ENCODE measurements at regions of chr22 and their contacts with region 1.

Region 1: DNA sequence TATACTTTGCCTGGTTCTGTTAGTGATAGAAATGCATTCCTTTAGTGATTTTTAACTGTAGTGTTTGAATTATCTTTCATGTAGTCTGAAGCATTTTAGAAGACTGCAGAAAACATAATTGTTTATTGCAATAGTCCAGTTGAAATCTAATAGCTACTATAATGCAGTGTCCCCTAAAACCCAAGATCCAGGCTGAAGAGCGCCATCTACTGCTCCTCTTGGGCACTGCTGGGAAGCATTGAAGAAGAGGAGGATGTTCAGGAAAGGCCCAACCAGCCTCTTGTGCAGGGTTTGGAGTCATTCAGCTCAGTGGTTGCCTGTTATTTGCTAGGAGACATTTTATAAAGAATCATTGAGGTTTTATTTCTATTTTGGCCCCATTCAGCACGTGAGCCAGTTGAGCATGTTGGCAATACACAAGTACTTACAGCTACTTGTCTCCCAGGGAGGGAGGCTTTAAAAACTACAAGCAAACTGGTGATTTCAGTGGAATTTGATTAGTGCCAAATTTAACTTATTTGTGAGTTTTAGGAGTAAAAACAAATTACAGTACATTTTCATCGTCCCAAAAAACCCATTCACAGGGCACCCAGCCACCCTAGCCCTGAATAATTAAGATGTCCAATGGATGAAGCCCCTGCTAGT is 74.9 kb upstream of the HORMAD2 start:
- DNase-seq: peak; percentile 17
- ATAC-seq: peak; percentile 85
- H3K4me3 ChIP-seq: no peak overlapping the region
- H3K27ac ChIP-seq: no peak overlapping the region
- H3K4me1 ChIP-seq: no peaks in the 10 kb centered on the region
- H3K27me3 ChIP-seq: no peaks in the 10 kb centered on the region
- CTCF ChIP-seq: peak; percentile 91 to 97 (median 96)
- EP300 ChIP-seq: no peak
- POLR2A ChIP-seq: no peak
- RAD21 ChIP-seq: peak; percentile 98

Region 2: DNA sequence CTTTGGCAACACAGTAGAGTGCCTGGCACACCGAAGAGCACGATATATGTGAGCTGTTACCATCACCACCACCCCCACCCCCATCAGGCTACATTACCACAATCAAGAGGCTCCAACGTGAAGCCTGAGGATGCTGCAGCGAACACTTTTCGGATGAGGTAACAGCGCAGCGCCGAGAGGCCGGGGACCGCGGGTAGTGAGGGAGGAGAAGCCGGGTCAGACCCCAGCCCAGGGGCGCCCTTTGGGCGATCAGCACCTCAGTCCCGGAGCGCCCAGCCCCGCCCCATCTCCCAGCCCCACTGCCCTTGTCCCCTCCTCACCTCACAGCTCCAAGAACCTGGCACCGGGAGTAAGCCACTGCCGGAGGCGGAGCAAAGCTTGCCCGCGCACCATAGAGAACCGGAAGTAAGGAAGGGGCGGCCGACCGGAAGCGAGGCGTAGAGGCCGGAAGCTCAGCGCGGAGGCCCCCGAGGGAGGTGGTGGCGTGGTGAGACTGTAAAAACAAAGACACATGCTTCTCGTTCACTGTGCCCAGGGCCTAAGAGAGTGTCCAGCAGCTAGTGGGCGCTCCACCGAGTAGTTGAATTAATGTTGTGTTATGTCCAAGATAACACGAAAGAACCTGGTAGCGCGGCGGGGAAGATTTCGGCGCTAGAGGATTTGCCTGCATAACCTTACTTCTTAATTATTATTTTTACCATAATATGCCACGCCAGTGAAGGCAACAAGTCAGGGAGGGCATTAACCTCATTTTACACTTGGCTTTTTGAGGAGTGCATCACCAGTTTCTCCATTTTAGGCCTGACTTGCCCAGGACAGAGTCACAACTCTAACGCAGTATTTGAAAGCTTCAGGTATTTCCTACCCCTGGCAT is 451.7 kb before region 1 on chr22 and contains the start of gene THOC5:
- CTCF ChIA-PET with region 1: no interaction called
- POLR2A ChIA-PET with region 1: no interaction called
- RAD21 ChIA-PET with region 1: no interaction called
- SMC1A ChIA-PET with region 1: no interaction called
- in situ Hi-C with region 1: no loop called
- intact Hi-C with region 1: no loop called
- DNase-seq: peak; percentile 71
- ATAC-seq: peak; percentile 99
- H3K4me3 ChIP-seq: peak within 1 kb of the TSS; percentile 77
- H3K27ac ChIP-seq: peak within 1 kb of the TSS; percentile 68
- H3K4me1 ChIP-seq: no peaks in the 10 kb centered on the region
- H3K27me3 ChIP-seq: no peaks in the 10 kb centered on the region
- CTCF ChIP-seq: peak; percentile 49 to 74 (median 58)
- EP300 ChIP-seq: no peak
- POLR2A ChIP-seq: peak; percentile 91
- RAD21 ChIP-seq: no peak
- polyA plus RNA-seq, gene THOC5: 20.9 to 40.9 TPM

Region 3: GRCh38 chr22:29625090-29625825 is 380.1 kb before region 1 on chr22:
- CTCF ChIA-PET with region 1: interaction called, 41 read pairs
- POLR2A ChIA-PET with region 1: no interaction called
- RAD21 ChIA-PET with region 1: interaction called, 4 read pairs
- SMC1A ChIA-PET with region 1: interaction called, 5 read pairs
- in situ Hi-C with region 1: no loop called
- intact Hi-C with region 1: loop called (anchors 1 kb)
- DNase-seq: no peak
- ATAC-seq: peak; percentile 79
- H3K4me3 ChIP-seq: no peak overlapping the region
- H3K27ac ChIP-seq: no peak overlapping the region
- H3K4me1 ChIP-seq: peaks cover 5% of the 10 kb centered on the region; the same call in 1 of the 2 replicates
- H3K27me3 ChIP-seq: no peaks in the 10 kb centered on the region
- CTCF ChIP-seq: peak; percentile 74 to 93 (median 87)
- EP300 ChIP-seq: no peak
- POLR2A ChIP-seq: no peak
- RAD21 ChIP-seq: peak; percentile 58; the same call in 1 of the 2 replicates

Region 4: DNA sequence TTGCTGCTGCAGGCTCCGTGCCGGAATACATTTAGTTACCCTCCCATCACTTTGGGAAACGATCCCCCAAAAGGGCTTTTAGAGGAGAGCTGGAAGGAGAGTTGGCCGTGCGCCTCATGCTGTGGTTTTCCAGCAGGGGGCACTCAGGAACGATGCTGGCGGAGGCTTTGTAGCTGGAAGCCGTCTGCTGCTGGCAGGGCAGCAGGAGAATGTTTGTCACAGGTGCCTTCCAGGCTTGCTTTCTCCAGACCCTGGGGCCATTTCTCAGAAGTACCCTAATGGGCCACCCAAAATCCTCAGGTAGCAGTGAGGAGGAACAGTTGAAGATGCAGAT is 315.5 kb before region 1 on chr22:
- CTCF ChIA-PET with region 1: interaction called, 51 read pairs
- POLR2A ChIA-PET with region 1: no interaction called
- RAD21 ChIA-PET with region 1: interaction called, 23 read pairs
- SMC1A ChIA-PET with region 1: interaction called, 20 read pairs
- in situ Hi-C with region 1: no loop called
- intact Hi-C with region 1: loop called (anchors 2 kb)
- DNase-seq: no peak
- ATAC-seq: peak; percentile 63
- H3K4me3 ChIP-seq: no peak overlapping the region
- H3K27ac ChIP-seq: no peak overlapping the region
- H3K4me1 ChIP-seq: no peaks in the 10 kb centered on the region
- H3K27me3 ChIP-seq: no peaks in the 10 kb centered on the region
- CTCF ChIP-seq: peak; percentile 61 to 69 (median 67); a peak in 5 of 6 replicates
- EP300 ChIP-seq: no peak
- POLR2A ChIP-seq: no peak
- RAD21 ChIP-seq: peak; percentile 55

Region 5: DNA sequence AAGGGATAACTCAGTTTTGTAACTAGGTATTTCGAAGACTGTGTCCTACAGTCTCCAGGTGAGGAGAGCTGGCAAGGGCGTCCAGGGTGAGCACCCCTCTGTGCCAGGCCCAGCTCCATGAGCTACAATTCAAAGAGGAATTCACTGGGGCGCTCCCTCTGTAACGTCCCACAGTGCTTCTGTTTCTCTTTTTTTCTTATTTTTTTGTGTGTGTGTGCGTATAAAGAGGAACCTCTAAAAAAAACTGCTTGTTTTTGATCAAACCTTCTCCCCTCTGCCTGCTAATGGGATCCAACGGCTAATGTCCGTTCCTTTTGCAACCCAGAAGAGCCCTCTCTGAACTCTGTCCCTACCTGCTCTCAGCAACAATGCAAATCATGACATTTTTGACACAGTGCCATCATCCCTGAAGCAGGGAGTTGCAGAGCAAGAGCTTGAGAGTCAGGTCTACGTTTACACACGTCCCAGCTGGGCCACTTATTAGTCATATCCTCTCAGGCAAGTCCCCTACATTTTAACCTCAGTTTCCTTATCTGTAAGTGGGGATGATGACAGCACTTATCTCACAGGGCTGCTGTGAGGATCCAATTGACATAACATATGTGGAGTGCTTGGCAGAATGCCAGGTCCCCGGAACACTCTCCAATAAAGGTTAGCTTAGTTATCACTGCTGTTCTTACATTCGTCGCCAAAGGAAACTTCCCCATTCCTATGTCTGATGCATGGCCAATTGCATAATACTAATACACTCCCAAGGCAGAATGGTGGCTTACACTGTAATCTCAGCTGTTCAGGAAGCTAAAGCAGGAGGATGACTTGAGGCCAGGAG is 184.2 kb before region 1 on chr22:
- CTCF ChIA-PET with region 1: interaction called, 4 read pairs
- POLR2A ChIA-PET with region 1: no interaction called
- RAD21 ChIA-PET with region 1: interaction called, 4 read pairs
- SMC1A ChIA-PET with region 1: interaction called, 4 read pairs
- in situ Hi-C with region 1: no loop called
- intact Hi-C with region 1: loop called (anchors 5 kb)
- DNase-seq: peak; percentile 82
- ATAC-seq: peak; percentile 98
- H3K4me3 ChIP-seq: no peak overlapping the region
- H3K27ac ChIP-seq: peak overlapping the region; percentile 70
- H3K4me1 ChIP-seq: peaks cover 7% of the 10 kb centered on the region; the same call in 1 of the 2 replicates
- H3K27me3 ChIP-seq: no peaks in the 10 kb centered on the region
- CTCF ChIP-seq: 0 out of 6 replicates have a peak, but pooled peaks of 1 of the 3 experiments have one; percentile 9
- EP300 ChIP-seq: no peak; a peak in 1 of 4 replicates
- POLR2A ChIP-seq: no peak
- RAD21 ChIP-seq: 0 out of 2 replicates have a peak, but pooled peaks have one; percentile 7

Region 6: GRCh38 chr22:30015846-30016245 is 10.5 kb after region 1 on chr22:
- CTCF ChIA-PET with region 1: interaction called, 7 read pairs
- POLR2A ChIA-PET with region 1: no interaction called
- RAD21 ChIA-PET with region 1: interaction called, 3 read pairs
- SMC1A ChIA-PET with region 1: interaction called, 14 read pairs
- in situ Hi-C with region 1: no loop called
- intact Hi-C with region 1: no loop called
- DNase-seq: no peak
- ATAC-seq: no peak
- H3K4me3 ChIP-seq: no peak overlapping the region
- H3K27ac ChIP-seq: no peak overlapping the region
- H3K4me1 ChIP-seq: no peaks in the 10 kb centered on the region
- H3K27me3 ChIP-seq: no peaks in the 10 kb centered on the region
- CTCF ChIP-seq: no peak
- EP300 ChIP-seq: no peak
- POLR2A ChIP-seq: no peak
- RAD21 ChIP-seq: no peak

Region 7: GRCh38 chr22:30089655-30089974 is 84.3 kb after region 1 on chr22:
- CTCF ChIA-PET with region 1: interaction called, 31 read pairs
- POLR2A ChIA-PET with region 1: no interaction called
- RAD21 ChIA-PET with region 1: interaction called, 19 read pairs
- SMC1A ChIA-PET with region 1: interaction called, 17 read pairs
- in situ Hi-C with region 1: no loop called
- intact Hi-C with region 1: loop called (anchors 2 kb)
- DNase-seq: no peak
- ATAC-seq: no peak
- H3K4me3 ChIP-seq: no peak overlapping the region
- H3K27ac ChIP-seq: no peak overlapping the region
- H3K4me1 ChIP-seq: no peaks in the 10 kb centered on the region
- H3K27me3 ChIP-seq: no peaks in the 10 kb centered on the region
- CTCF ChIP-seq: no peak
- EP300 ChIP-seq: no peak
- POLR2A ChIP-seq: no peak
- RAD21 ChIP-seq: no peak

Measured in GM12878 (cell line).